MCF 10A (cell line): ENCODE measurements at regions of chr17 and their contacts with region 1.

Region 1: GRCh38 chr17:40647624-40648383 is at the start of gene SMARCE1:
- DNase-seq: peak; percentile 68
- H3K4me3 Mint-ChIP-seq: peak within 1 kb of the TSS; percentile 85
- H3K27ac Mint-ChIP-seq: peak within 1 kb of the TSS; percentile 100
- H3K4me1 Mint-ChIP-seq: peaks cover 27% of the 10 kb centered on the region
- H3K27me3 Mint-ChIP-seq: no peaks in the 10 kb centered on the region
- CTCF ChIP-seq: no peak
- total RNA-seq, gene SMARCE1: 120 and 128 TPM in 2 replicates

Region 2: GRCh38 chr17:40632216-40632615 is 15.6 kb before region 1 on chr17:
- CTCF ChIA-PET with region 1: interaction called, 4 read pairs
- POLR2A ChIA-PET with region 1: interaction called, 33 read pairs
- intact Hi-C with region 1: no loop called
- DNase-seq: no peak
- H3K4me3 Mint-ChIP-seq: no peak overlapping the region
- H3K27ac Mint-ChIP-seq: no peak overlapping the region
- H3K4me1 Mint-ChIP-seq: no peaks in the 10 kb centered on the region
- H3K27me3 Mint-ChIP-seq: no peaks in the 10 kb centered on the region
- CTCF ChIP-seq: no peak

Region 3: GRCh38 chr17:40696537-40697072 is 48.8 kb after region 1 on chr17:
- CTCF ChIA-PET with region 1: interaction called, 4 read pairs
- POLR2A ChIA-PET with region 1: interaction called, 22 read pairs
- intact Hi-C with region 1: no loop called
- DNase-seq: peak; percentile 84
- H3K4me3 Mint-ChIP-seq: no peak overlapping the region
- H3K27ac Mint-ChIP-seq: peak overlapping the region; percentile 70
- H3K4me1 Mint-ChIP-seq: peaks cover 13% of the 10 kb centered on the region
- H3K27me3 Mint-ChIP-seq: no peaks in the 10 kb centered on the region
- CTCF ChIP-seq: no peak

Region 4: GRCh38 chr17:40707720-40708119 is 59.9 kb after region 1 on chr17:
- CTCF ChIA-PET with region 1: no interaction called
- POLR2A ChIA-PET with region 1: interaction called, 21 read pairs
- intact Hi-C with region 1: no loop called
- DNase-seq: peak; percentile 74
- H3K4me3 Mint-ChIP-seq: no peak overlapping the region
- H3K27ac Mint-ChIP-seq: peak overlapping the region; percentile 84
- H3K4me1 Mint-ChIP-seq: peaks cover 30% of the 10 kb centered on the region
- H3K27me3 Mint-ChIP-seq: no peaks in the 10 kb centered on the region
- CTCF ChIP-seq: no peak

Region 5: GRCh38 chr17:40818733-40819527 is 171.1 kb after region 1 on chr17:
- CTCF ChIA-PET with region 1: no interaction called
- POLR2A ChIA-PET with region 1: interaction called, 13 read pairs
- intact Hi-C with region 1: no loop called
- DNase-seq: peak; percentile 69
- H3K4me3 Mint-ChIP-seq: peak overlapping the region; percentile 83
- H3K27ac Mint-ChIP-seq: peak overlapping the region; percentile 95
- H3K4me1 Mint-ChIP-seq: peaks cover 28% of the 10 kb centered on the region
- H3K27me3 Mint-ChIP-seq: no peaks in the 10 kb centered on the region
- CTCF ChIP-seq: no peak